ENCODE measurements at regions of chr6 and their contacts with region 1.

Region 1: GRCh38 chr6:34248727-34249551 is at the start of gene SMIM29:
- DNase-seq: peak; percentile 89
- ATAC-seq: peak; percentile 60
- H3K4me3 ChIP-seq: peak within 1 kb of the TSS; percentile 80 to 87
- H3K27ac ChIP-seq: peak within 1 kb of the TSS; percentile 95
- H3K4me1 ChIP-seq: peaks cover 26 to 59% of the 10 kb centered on the region in 2 experiments
- H3K27me3 ChIP-seq: no peaks in the 10 kb centered on the region
- CTCF ChIP-seq: peak in 2 of 3 experiments; percentile 71 to 84; a peak in 4 of 6 replicates
- POLR2A ChIP-seq: no peak
- RAD21 ChIP-seq: no peak
- total RNA-seq, gene SMIM29: 25.1 TPM

Region 2: GRCh38 chr6:34196126-34196830 is 52.7 kb before region 1 on chr6:
- CTCF ChIA-PET with region 1: interaction called, 14 read pairs
- POLR2A ChIA-PET with region 1: interaction called, 27 read pairs
- RAD21 ChIA-PET with region 1: interaction called, 6 to 7 read pairs
- intact Hi-C with region 1: loop called (anchors 2 kb)
- DNase-seq: peak; percentile 26
- ATAC-seq: peak; percentile 91
- H3K4me3 ChIP-seq: peak overlapping the region in 1 of 2 experiments; percentile 28; a peak in 2 of 4 replicates
- H3K27ac ChIP-seq: no peak overlapping the region; the same call in 1 of the 2 replicates
- H3K4me1 ChIP-seq: peaks cover 4 to 31% of the 10 kb centered on the region in 2 experiments
- H3K27me3 ChIP-seq: no peaks in the 10 kb centered on the region
- CTCF ChIP-seq: peak; percentile 71 to 90 (median 79)
- POLR2A ChIP-seq: peak; percentile 32
- RAD21 ChIP-seq: peak; percentile 96

Region 3: GRCh38 chr6:34223956-34224940 is 24.7 kb before region 1 on chr6:
- CTCF ChIA-PET with region 1: interaction called, 5 read pairs
- POLR2A ChIA-PET with region 1: interaction called, 12 read pairs
- RAD21 ChIA-PET with region 1: interaction called in 1 of 2 experiments, 3 read pairs
- intact Hi-C with region 1: no loop called
- DNase-seq: no peak
- ATAC-seq: peak; percentile 80
- H3K4me3 ChIP-seq: peak overlapping the region; percentile 36 to 59
- H3K27ac ChIP-seq: peak overlapping the region; percentile 92
- H3K4me1 ChIP-seq: peaks cover 54 to 69% of the 10 kb centered on the region in 2 experiments
- H3K27me3 ChIP-seq: no peaks in the 10 kb centered on the region
- CTCF ChIP-seq: no peak
- POLR2A ChIP-seq: peak; percentile 27
- RAD21 ChIP-seq: no peak

Region 4: GRCh38 chr6:34236131-34236996 is 12.6 kb before region 1 on chr6 and contains the start of gene HMGA1:
- CTCF ChIA-PET with region 1: interaction called, 3 read pairs
- POLR2A ChIA-PET with region 1: interaction called, 21 read pairs
- RAD21 ChIA-PET with region 1: no interaction called
- intact Hi-C with region 1: no loop called
- DNase-seq: no peak
- ATAC-seq: peak; percentile 66
- H3K4me3 ChIP-seq: peak within 1 kb of the TSS; percentile 69 to 93
- H3K27ac ChIP-seq: peak within 1 kb of the TSS; percentile 95
- H3K4me1 ChIP-seq: peaks cover 33 to 81% of the 10 kb centered on the region in 2 experiments
- H3K27me3 ChIP-seq: no peaks in the 10 kb centered on the region
- CTCF ChIP-seq: no peak; a peak in 1 of 6 replicates
- POLR2A ChIP-seq: peak; percentile 98
- RAD21 ChIP-seq: no peak
- total RNA-seq, gene HMGA1: 2,459 TPM

Region 5: GRCh38 chr6:34414999-34415858 is 166.3 kb after region 1 on chr6:
- CTCF ChIA-PET with region 1: interaction called, 69 read pairs
- POLR2A ChIA-PET with region 1: interaction called, 38 read pairs
- RAD21 ChIA-PET with region 1: interaction called, 3 to 4 read pairs
- intact Hi-C with region 1: loop called (anchors 1 kb)
- DNase-seq: peak; percentile 38
- ATAC-seq: peak; percentile 65
- H3K4me3 ChIP-seq: no peak overlapping the region
- H3K27ac ChIP-seq: no peak overlapping the region
- H3K4me1 ChIP-seq: peaks cover 9 to 34% of the 10 kb centered on the region in 2 experiments
- H3K27me3 ChIP-seq: no peaks in the 10 kb centered on the region
- CTCF ChIP-seq: peak; percentile 48 to 70 (median 49)
- POLR2A ChIP-seq: no peak
- RAD21 ChIP-seq: peak; percentile 82

Region 6: DNA sequence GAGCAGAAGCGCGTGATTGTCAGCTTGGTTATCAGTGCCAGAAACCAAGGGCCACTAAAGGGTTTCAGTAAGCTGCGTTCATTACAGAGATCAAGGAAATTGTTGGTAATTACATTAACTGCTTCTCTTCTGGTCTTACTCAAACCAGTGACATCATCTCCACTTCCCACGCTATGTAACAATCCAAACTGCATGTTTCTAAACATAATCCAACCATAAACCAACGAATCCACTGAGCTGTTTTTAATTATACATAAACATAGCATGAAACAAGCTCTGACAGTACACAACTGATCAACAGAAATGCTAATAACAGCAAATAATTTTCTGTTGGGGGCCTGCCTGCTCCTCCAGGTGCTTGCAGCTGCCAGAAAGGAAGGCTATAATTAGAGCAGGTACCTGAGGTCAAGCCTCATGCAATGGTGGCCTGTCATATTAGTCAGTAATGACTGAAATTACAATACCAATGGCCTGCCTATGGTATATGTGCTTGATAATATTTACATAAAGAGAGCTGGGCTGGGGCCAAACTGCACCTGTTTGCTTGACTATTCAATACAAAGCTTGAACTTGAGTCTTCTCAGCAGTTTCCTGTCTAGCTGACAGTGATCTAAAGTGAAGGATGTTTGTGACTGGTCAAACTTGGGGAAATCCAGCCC is 407.6 kb after region 1 on chr6:
- CTCF ChIA-PET with region 1: no interaction called
- POLR2A ChIA-PET with region 1: no interaction called
- RAD21 ChIA-PET with region 1: no interaction called
- intact Hi-C with region 1: no loop called
- DNase-seq: no peak
- ATAC-seq: peak; percentile 31; the same call in 1 of the 2 replicates
- H3K4me3 ChIP-seq: peak overlapping the region in 1 of 2 experiments; percentile 58; a peak in 3 of 4 replicates
- H3K27ac ChIP-seq: peak overlapping the region; percentile 84
- H3K4me1 ChIP-seq: peaks cover 30 to 51% of the 10 kb centered on the region in 2 experiments
- H3K27me3 ChIP-seq: no peaks in the 10 kb centered on the region
- CTCF ChIP-seq: no peak
- POLR2A ChIP-seq: no peak
- RAD21 ChIP-seq: no peak

Measured in HCT116 (cell line).